Pancreas (tissue), 10 donors: ENCODE measurements at regions of chr21 and their contacts with region 1.

Region 1: DNA sequence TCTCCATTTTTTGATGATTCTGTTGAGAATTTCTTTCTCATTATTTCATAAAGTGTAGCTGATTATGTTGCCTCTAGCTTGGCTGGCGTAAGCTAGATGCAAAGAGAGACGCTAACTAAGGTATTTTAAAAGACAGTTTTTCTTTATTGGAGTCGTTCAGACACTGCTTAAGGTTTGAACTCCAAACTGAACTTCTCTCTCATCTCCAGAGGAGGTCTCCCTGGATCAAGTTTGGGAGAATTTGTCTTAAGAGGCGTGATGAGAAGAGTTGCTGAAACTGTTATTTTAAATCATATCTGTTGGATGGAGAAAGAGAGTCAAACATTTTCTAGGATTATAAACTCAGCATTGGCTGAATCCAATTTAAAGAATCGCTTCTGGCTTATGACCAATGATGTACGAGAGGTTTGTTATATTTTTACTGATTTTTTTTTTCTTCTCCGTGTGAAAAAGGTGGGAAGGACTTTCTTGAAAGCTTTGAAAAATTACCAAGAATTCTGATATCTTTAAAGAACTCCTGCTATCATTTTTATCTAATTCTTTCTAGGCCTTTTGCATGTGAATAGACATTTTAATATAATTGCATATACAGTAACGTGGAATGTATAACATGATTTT is 34.0 kb downstream of the MAP3K7CL start:
- DNase-seq: no peak
- ATAC-seq: peak; percentile 77 to 92 (median 88)
- H3K4me3 ChIP-seq: no peak overlapping the region
- H3K27ac ChIP-seq: peak overlapping the region in 1 of 4 donors; percentile 19
- H3K4me1 ChIP-seq: no peaks in the 10 kb centered on the region
- H3K27me3 ChIP-seq: no peaks in the 10 kb centered on the region
- CTCF ChIP-seq: peak; percentile 10 to 61 (median 54)

Region 2: DNA sequence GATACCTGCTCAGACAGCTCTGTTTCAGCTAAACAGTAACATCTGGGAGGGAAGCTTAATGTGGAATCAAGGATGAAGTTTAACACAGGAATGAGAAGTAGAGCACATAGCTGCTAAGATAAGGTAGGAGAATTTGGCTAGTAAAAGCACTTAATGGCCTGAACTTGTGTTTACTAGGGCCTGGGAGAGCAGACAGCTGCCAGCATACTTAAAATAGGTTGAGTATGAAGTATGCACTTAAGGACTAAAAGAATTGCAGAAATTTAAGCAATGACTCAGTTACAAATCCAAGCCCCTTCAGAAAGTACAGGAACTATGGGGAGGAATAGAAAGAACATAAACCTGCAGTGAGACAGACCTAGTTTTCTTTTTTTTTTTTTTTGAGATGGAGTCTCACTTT is 187.3 kb after region 1 on chr21:
- intact Hi-C with region 1: loop called in 1 of 3 experiments (anchors 5 kb)
- DNase-seq: peak in 4 of 6 donors; percentile 41 to 77 (median 60)
- ATAC-seq: peak; percentile 86 to 92 (median 88)
- H3K4me3 ChIP-seq: no peak overlapping the region
- H3K27ac ChIP-seq: peak overlapping the region in 2 of 4 donors; percentile 10 to 40
- H3K4me1 ChIP-seq: peaks cover 4 to 19% (median 10%) of the 10 kb centered on the region in 3 donors
- H3K27me3 ChIP-seq: no peaks in the 10 kb centered on the region
- CTCF ChIP-seq: no peak

Region 3: GRCh38 chr21:29372063-29372802 is 207.8 kb after region 1 on chr21:
- intact Hi-C with region 1: loop called in 1 of 3 experiments (anchors 10 kb)
- DNase-seq: peak in 3 of 6 donors; percentile 25 to 56 (median 44)
- ATAC-seq: peak; percentile 87 to 97 (median 93)
- H3K4me3 ChIP-seq: no peak overlapping the region
- H3K27ac ChIP-seq: no peak overlapping the region
- H3K4me1 ChIP-seq: no peaks in the 10 kb centered on the region
- H3K27me3 ChIP-seq: no peaks in the 10 kb centered on the region
- CTCF ChIP-seq: peak; percentile 47 to 76 (median 63)

Region 4: GRCh38 chr21:29571949-29572348 is 407.5 kb after region 1 on chr21:
- intact Hi-C with region 1: no loop called
- DNase-seq: no peak
- ATAC-seq: no peak
- H3K4me3 ChIP-seq: no peak overlapping the region
- H3K27ac ChIP-seq: no peak overlapping the region
- H3K4me1 ChIP-seq: no peaks in the 10 kb centered on the region
- H3K27me3 ChIP-seq: no peaks in the 10 kb centered on the region
- CTCF ChIP-seq: no peak

Region 5: DNA sequence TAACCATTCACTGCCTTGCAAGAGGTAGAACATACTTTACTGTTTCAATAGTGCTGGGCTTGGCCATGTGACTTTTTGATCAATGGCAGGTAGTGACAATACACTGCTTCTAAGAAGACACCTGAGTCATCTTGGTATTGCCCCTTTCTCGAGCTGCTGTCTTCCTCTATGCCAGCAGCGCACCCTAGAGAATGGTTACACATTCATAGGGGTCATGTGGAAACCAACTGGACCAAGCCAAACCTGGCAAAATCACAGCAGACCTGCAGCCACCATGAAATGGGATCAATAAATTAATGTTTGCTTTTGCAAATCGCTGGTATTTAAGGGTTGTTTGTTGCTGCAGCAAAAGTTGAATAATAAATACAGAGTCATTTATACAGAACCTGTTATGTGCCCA is 653.0 kb after region 1 on chr21:
- intact Hi-C with region 1: no loop called
- DNase-seq: no peak
- ATAC-seq: no peak
- H3K4me3 ChIP-seq: no peak overlapping the region
- H3K27ac ChIP-seq: no peak overlapping the region
- H3K4me1 ChIP-seq: peaks cover 5 to 7% (median 5%) of the 10 kb centered on the region in 3 donors
- H3K27me3 ChIP-seq: no peaks in the 10 kb centered on the region
- CTCF ChIP-seq: no peak